ENCODE measurements at regions of chr11 and their contacts with region 1.

Region 1: DNA sequence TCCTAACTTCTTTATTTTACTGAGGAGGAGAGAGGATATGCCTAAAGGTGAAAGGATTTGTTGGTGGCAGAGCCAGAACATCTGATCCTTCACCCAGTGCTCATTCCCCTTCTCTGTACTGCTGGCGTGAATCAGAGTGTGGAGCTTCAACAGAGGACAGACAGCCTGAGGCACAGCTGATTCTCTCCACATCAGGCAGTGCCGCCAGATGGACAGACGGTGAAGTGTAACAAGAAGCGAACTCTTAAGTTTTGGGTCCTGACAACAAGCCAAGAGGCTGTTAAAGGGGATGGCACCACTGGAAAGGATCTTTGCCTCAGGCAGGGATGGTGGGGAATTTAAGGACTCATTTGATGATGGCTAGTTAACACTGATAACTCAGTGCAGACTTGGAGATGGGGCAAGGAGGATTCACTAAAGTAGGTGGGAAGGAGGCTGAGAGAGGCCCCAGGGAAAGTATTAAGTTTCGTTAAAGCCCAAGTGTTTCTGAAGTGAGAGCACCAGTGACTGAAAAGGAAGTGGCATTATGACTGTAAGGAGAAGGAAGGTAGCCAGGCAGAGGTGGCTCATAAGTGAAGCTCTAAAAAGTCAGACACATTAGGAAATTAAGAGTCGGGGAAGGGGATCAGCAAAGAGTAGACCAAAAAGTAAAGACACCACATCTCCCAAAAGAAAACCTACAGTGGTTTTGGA is 81.3 kb downstream of the CLPB start:
- DNase-seq: no peak
- ATAC-seq: peak in 2 of 4 donors; percentile 37 to 63
- H3K4me3 ChIP-seq: no peak overlapping the region
- H3K27ac ChIP-seq: no peak overlapping the region
- H3K4me1 ChIP-seq: peaks cover 21% of the 10 kb centered on the region
- H3K27me3 ChIP-seq: no peaks in the 10 kb centered on the region
- CTCF ChIP-seq: no peak

Region 2: GRCh38 chr11:72026090-72026489 is 326.9 kb before region 1 on chr11:
- intact Hi-C with region 1: no loop called
- DNase-seq: no peak
- ATAC-seq: peak in 3 of 4 donors; percentile 32 to 71 (median 59)
- H3K4me3 ChIP-seq: no peak overlapping the region
- H3K27ac ChIP-seq: peak overlapping the region; percentile 57
- H3K4me1 ChIP-seq: peaks cover 39% of the 10 kb centered on the region
- H3K27me3 ChIP-seq: no peaks in the 10 kb centered on the region
- CTCF ChIP-seq: no peak

Region 3: DNA sequence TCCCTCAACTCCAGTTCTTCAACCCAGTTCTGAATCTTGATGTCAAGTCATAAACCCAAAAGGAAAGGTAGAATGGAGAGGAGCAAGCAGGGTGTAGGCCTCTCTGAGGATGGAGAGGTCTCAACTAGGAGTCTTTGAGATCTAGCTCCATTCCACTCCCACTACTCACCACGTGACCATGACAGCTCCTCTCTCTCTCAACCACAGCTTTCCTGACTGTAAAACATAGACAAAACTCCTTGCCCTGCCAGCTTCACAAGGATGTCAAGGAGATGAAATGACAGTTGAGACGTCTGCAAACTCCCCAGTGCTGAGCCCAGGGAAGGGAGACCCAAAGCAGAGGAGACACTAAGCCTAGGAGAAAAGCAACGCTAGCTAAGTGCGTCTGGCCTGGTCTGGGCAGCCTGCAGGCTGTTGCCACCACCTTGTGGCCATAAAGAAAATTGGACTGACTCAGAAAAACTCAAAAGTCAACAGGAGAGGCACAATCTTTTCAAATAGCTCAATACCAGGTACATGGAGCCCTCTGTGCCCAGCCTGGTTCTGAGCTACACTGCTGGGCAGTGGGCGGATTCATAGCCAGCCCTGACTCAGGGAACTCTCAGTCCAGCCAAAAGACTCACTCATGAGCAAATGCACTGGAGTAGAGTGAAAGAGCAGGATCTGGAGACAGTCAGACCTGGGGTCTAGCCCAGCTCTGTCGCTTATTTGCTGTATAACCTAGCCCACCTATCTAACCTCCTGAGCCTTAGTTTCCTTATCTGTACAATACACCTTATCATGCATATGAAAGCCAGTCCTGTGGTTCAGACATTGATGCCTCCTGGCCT is 78.0 kb after region 1 on chr11:
- intact Hi-C with region 1: loop called in 1 of 2 experiments (anchors 5 kb)
- DNase-seq: no peak
- ATAC-seq: no peak
- H3K4me3 ChIP-seq: no peak overlapping the region
- H3K27ac ChIP-seq: no peak overlapping the region
- H3K4me1 ChIP-seq: peaks cover 22% of the 10 kb centered on the region
- H3K27me3 ChIP-seq: no peaks in the 10 kb centered on the region
- CTCF ChIP-seq: peak; percentile 76

Region 4: GRCh38 chr11:73141848-73142286 is 788.9 kb after region 1 on chr11:
- intact Hi-C with region 1: no loop called
- DNase-seq: peak; percentile 80 to 87
- ATAC-seq: peak; percentile 22 to 39 (median 32)
- H3K4me3 ChIP-seq: peak overlapping the region; percentile 78
- H3K27ac ChIP-seq: peak overlapping the region; percentile 95
- H3K4me1 ChIP-seq: peaks cover 18% of the 10 kb centered on the region
- H3K27me3 ChIP-seq: no peaks in the 10 kb centered on the region
- CTCF ChIP-seq: no peak